HepG2 (cell line): ENCODE measurements at regions of chr16 and their contacts with region 1.

Region 1: GRCh38 chr16:2155091-2156021 is at the start of gene TRAF7:
- DNase-seq: peak; percentile 100
- ATAC-seq: peak; percentile 67
- H3K4me3 ChIP-seq: peak within 1 kb of the TSS; percentile 91 to 99 (median 98)
- H3K27ac ChIP-seq: peak within 1 kb of the TSS; percentile 85
- H3K4me1 ChIP-seq: peaks cover 74% of the 10 kb centered on the region
- H3K27me3 ChIP-seq: no peaks in the 10 kb centered on the region; a peak in 1 of 5 replicates
- CTCF ChIP-seq: no peak
- EP300 ChIP-seq: peak; percentile 4 to 14; a peak in 1 of 4 replicates
- POLR2A ChIP-seq: peak; percentile 100
- RAD21 ChIP-seq: peak; percentile 50
- total RNA-seq, gene TRAF7: 40.3 and 47.9 TPM in 2 replicates

Region 2: GRCh38 chr16:1964506-1965395 is 190.6 kb before region 1 on chr16 and contains the start of gene RPS2:
- CTCF ChIA-PET with region 1: no interaction called
- POLR2A ChIA-PET with region 1: interaction called, 15 read pairs
- in situ Hi-C with region 1: no loop called
- intact Hi-C with region 1: no loop called
- DNase-seq: peak; percentile 97
- ATAC-seq: peak; percentile 61
- H3K4me3 ChIP-seq: peak within 1 kb of the TSS; percentile 84 to 94 (median 92)
- H3K27ac ChIP-seq: peak within 1 kb of the TSS; percentile 88
- H3K4me1 ChIP-seq: peaks cover 44% of the 10 kb centered on the region
- H3K27me3 ChIP-seq: no peaks in the 10 kb centered on the region; a peak in 1 of 5 replicates
- CTCF ChIP-seq: peak; percentile 2; the same call in 1 of the 2 replicates
- EP300 ChIP-seq: peak in 1 of 2 experiments; percentile 26; a peak in 1 of 4 replicates
- POLR2A ChIP-seq: peak; percentile 100
- RAD21 ChIP-seq: peak; percentile 25
- total RNA-seq, gene RPS2: 1,908 and 1,988 TPM in 2 replicates

Region 3: GRCh38 chr16:2009164-2009788 is 146.1 kb before region 1 on chr16:
- CTCF ChIA-PET with region 1: no interaction called
- POLR2A ChIA-PET with region 1: interaction called, 18 read pairs
- in situ Hi-C with region 1: no loop called
- intact Hi-C with region 1: no loop called
- DNase-seq: no peak
- ATAC-seq: peak; percentile 6
- H3K4me3 ChIP-seq: peak overlapping the region; percentile 76 to 81 (median 79)
- H3K27ac ChIP-seq: peak overlapping the region; percentile 78
- H3K4me1 ChIP-seq: peaks cover 69% of the 10 kb centered on the region
- H3K27me3 ChIP-seq: no peaks in the 10 kb centered on the region
- CTCF ChIP-seq: no peak
- EP300 ChIP-seq: no peak
- POLR2A ChIP-seq: no peak
- RAD21 ChIP-seq: no peak

Region 4: DNA sequence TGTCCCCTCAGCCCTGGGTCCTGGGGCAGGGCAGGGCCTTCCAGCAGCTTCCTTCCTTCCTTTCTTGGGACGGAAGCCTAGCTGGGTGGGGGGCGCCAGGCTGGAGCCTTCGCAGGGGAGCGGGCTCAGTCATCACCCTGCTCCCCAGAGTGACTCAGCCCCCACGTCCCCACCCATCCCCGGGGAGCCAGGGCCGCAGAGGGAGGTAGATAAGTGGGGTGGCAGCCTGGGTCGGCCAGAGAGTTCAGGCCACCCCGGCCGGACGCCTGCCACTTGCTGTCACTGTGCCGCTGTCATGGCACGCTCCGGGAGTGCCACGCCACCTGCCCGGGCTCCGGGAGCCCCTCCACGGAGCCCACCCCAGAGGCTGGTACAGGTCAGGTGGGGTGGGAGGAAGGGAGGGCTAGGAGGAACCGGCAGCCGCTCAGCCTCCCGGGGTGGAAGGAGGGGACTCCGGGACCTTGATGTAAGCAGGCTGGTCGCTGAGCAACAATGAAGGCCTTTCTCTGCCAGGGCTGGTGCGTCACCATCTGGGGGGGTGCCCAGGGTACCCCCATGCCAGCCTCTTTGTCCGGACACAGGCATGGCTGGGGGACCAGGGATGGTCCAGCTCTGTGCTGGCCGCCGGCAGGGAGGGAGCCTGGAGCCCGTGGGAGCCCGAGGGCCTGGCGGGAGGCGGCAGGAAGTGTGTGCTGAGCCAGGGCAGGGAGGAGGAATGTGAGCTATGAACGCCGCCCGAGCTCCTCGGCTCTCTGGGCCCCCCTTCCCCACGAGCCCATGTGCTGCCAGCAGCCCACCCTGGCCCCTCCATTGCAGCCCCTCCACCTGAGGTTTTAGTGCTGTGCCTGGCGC is 122.1 kb before region 1 on chr16:
- CTCF ChIA-PET with region 1: no interaction called
- POLR2A ChIA-PET with region 1: interaction called, 16 read pairs
- in situ Hi-C with region 1: no loop called
- intact Hi-C with region 1: no loop called
- DNase-seq: peak; percentile 53
- ATAC-seq: peak; percentile 63
- H3K4me3 ChIP-seq: peak overlapping the region; percentile 24 to 69 (median 46); a peak in 5 of 6 replicates
- H3K27ac ChIP-seq: peak overlapping the region; percentile 89
- H3K4me1 ChIP-seq: peaks cover 83% of the 10 kb centered on the region
- H3K27me3 ChIP-seq: no peaks in the 10 kb centered on the region
- CTCF ChIP-seq: no peak
- EP300 ChIP-seq: no peak
- POLR2A ChIP-seq: no peak
- RAD21 ChIP-seq: no peak

Region 5: DNA sequence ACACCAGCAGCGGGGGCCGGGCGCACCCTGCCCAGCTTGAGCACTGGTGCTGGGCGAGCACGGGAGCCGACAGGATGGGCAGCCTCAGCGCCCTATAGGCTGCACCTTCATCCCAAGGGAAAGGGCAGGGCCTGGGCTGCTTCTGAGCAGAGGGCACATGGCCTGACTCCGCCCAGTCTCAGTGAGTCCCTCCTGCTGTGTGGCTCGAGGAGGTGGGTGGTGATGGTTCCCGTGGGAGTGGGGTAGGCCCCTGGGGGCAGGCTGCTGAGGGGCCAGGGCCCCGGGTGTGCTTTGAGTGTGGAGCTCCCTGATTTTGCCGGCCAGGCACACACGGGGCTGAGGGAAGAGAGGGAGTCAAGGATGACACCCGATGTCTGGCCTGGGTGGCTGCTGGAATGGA is 69.7 kb before region 1 on chr16:
- CTCF ChIA-PET with region 1: no interaction called
- POLR2A ChIA-PET with region 1: no interaction called
- in situ Hi-C with region 1: no loop called
- intact Hi-C with region 1: no loop called
- DNase-seq: no peak
- ATAC-seq: peak; percentile 3; the same call in 2 of the 3 replicates
- H3K4me3 ChIP-seq: no peak overlapping the region
- H3K27ac ChIP-seq: no peak overlapping the region
- H3K4me1 ChIP-seq: no peaks in the 10 kb centered on the region
- H3K27me3 ChIP-seq: no peaks in the 10 kb centered on the region
- CTCF ChIP-seq: no peak
- EP300 ChIP-seq: no peak
- POLR2A ChIP-seq: no peak
- RAD21 ChIP-seq: no peak

Region 6: DNA sequence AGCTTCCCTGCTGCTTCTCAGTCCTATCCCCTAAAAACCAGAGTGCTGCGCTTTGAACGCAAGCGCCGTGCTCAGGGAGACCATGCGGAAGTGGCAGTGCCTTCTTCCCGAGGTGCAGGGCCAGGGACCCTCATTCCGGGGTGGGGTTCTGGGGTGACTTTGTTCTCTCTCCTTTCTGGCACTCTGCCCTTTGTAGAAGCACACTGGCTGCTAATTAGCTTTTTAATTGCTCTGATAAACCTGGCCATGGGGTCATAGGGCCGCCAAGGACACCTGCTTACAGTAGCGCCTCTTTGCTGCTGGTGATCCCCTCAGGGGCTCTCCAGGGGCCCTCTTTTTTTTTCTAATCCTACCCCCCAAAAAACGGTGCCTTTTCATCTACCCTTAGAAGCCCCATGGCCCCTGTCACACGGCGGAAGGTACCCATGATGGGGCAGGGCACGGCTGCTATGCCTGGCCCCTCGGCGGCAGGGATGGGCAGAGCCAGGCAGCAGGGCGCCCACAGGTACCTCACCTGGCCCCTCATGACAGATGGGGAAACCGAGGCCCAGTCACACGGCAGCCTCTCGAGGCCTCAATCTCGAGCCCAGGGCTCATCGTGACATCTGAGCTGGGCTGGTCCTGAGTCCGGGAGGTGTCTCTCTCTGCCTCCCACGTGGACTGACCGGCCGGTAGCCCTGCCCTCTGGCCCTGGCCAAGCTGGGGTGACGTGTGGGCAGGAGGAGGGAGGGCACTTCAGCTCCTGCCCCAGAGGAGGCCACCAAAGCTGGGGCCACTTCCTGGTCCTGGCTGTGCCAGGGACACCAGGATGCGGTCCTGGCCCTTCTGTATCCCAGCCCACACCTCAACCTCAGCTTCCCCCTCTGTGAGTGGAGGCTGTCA is 11.6 kb after region 1 on chr16:
- CTCF ChIA-PET with region 1: no interaction called
- POLR2A ChIA-PET with region 1: interaction called, 36 read pairs
- in situ Hi-C with region 1: no loop called
- intact Hi-C with region 1: no loop called
- DNase-seq: no peak
- ATAC-seq: no peak
- H3K4me3 ChIP-seq: no peak overlapping the region
- H3K27ac ChIP-seq: no peak overlapping the region
- H3K4me1 ChIP-seq: peaks cover 38% of the 10 kb centered on the region
- H3K27me3 ChIP-seq: no peaks in the 10 kb centered on the region
- CTCF ChIP-seq: no peak
- EP300 ChIP-seq: no peak
- POLR2A ChIP-seq: no peak
- RAD21 ChIP-seq: no peak

Region 7: GRCh38 chr16:2205104-2205966 is 50.0 kb after region 1 on chr16 and contains the start of gene MLST8:
- CTCF ChIA-PET with region 1: no interaction called
- POLR2A ChIA-PET with region 1: interaction called, 18 read pairs
- in situ Hi-C with region 1: no loop called
- intact Hi-C with region 1: no loop called
- DNase-seq: peak; percentile 65
- ATAC-seq: peak; percentile 52
- H3K4me3 ChIP-seq: peak within 1 kb of the TSS; percentile 71 to 96 (median 83)
- H3K27ac ChIP-seq: peak within 1 kb of the TSS; percentile 89
- H3K4me1 ChIP-seq: peaks cover 33% of the 10 kb centered on the region
- H3K27me3 ChIP-seq: 0 out of 5 replicates have a peak, but pooled peaks cover 0 to 1% of the 10 kb centered on the region in 2 experiments
- CTCF ChIP-seq: peak; percentile 38; the same call in 1 of the 2 replicates
- EP300 ChIP-seq: peak in 1 of 2 experiments; percentile 18; a peak in 1 of 4 replicates
- POLR2A ChIP-seq: peak; percentile 77 to 80
- RAD21 ChIP-seq: no peak
- total RNA-seq, gene MLST8: 25.2 and 30.8 TPM in 2 replicates

Region 8: DNA sequence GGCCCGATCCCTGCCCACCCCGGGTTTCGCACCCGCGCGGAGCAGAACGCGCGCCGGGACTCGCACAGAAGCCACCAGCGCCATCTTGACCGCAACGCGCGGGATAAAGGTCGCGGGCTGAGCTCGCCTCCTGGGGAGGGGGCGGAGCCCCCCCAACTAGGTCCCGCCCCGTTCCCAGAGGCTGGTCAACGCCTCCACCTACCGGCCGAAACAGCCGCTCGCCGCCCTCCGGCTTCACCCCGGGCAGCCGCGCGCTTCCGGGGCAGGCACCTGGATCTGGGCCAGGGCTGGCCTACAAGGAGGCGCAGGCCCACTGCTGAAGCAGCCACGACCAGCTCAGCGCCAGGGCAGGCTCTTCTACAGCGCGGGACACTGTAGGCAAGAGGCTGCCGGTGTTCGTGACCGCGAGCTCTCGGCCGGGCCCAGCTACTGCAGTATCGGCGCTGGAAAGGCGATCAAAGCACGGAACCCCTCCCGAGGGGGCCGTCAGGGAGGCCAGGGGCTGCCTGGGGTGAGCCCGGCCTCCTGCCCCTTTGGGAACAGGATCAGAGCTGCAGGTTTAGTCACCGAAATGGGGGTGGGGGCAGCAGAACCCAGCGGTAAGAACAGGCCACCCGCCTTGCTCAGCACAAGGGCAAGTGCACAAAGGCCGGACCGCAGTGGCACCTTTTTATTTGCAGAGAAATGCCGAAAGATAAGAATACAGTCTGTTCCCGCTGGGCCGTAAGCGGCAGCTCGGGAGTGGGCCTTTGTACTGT is 96.3 kb after region 1 on chr16 and contains the start of gene ECI1:
- CTCF ChIA-PET with region 1: no interaction called
- POLR2A ChIA-PET with region 1: interaction called, 79 read pairs
- in situ Hi-C with region 1: no loop called
- intact Hi-C with region 1: no loop called
- DNase-seq: peak; percentile 87
- ATAC-seq: peak; percentile 90
- H3K4me3 ChIP-seq: peak within 1 kb of the TSS; percentile 71 to 84 (median 75)
- H3K27ac ChIP-seq: peak within 1 kb of the TSS; percentile 83
- H3K4me1 ChIP-seq: peaks cover 27% of the 10 kb centered on the region
- H3K27me3 ChIP-seq: no peaks in the 10 kb centered on the region; a peak in 1 of 5 replicates
- CTCF ChIP-seq: peak; percentile 98
- EP300 ChIP-seq: peak in 1 of 2 experiments; percentile 36; a peak in 2 of 4 replicates
- POLR2A ChIP-seq: peak; percentile 85 to 95
- RAD21 ChIP-seq: peak; percentile 94
- total RNA-seq, gene ECI1: 73.8 and 82.0 TPM in 2 replicates

Region 9: DNA sequence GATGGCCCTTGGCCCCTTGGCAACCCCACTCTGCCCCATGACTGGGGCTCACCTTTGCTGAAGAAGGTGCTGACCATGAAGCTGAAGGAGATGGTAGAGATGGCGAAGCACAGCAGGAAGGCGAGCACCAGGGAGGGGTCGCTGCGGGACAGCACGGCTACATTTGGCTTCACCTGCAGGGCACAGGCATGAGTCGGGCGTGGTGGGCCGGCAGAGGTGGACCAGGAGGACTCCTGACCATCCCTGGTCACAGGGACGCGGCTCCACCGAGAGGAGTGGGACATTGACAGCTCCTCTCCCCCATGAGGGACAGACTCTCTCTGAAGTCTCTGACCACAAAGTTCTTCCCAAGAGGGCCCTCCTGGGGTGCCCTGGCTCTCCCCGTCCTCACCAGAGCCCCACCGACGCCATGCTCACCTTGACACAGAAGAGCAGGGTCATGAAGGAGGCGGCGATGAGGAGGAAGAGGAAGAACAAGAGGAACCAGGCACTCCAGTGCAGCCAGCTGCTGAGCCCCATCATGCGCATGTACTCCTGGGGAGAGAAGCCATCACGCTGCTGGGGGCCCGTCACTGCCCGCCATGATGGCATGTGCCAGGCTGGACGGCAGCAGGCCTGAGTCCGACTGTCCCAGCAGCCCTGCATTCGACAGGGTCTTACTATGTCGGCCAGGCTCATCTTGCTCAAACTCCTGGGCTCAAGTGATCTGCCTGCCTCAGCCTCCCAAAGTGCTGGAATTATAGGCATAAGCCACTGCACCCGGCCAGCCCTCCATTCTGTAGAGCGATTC is 162.1 kb after region 1 on chr16:
- CTCF ChIA-PET with region 1: no interaction called
- POLR2A ChIA-PET with region 1: no interaction called
- in situ Hi-C with region 1: no loop called
- intact Hi-C with region 1: no loop called
- DNase-seq: no peak
- ATAC-seq: no peak; the same call in 2 of the 3 replicates
- H3K4me3 ChIP-seq: no peak overlapping the region
- H3K27ac ChIP-seq: no peak overlapping the region
- H3K4me1 ChIP-seq: no peaks in the 10 kb centered on the region
- H3K27me3 ChIP-seq: peaks cover 8 to 51% of the 10 kb centered on the region in 2 experiments
- CTCF ChIP-seq: no peak
- EP300 ChIP-seq: no peak
- POLR2A ChIP-seq: no peak
- RAD21 ChIP-seq: no peak